ENCODE measurements at regions of chrX and their contacts with region 1.

Region 1: DNA sequence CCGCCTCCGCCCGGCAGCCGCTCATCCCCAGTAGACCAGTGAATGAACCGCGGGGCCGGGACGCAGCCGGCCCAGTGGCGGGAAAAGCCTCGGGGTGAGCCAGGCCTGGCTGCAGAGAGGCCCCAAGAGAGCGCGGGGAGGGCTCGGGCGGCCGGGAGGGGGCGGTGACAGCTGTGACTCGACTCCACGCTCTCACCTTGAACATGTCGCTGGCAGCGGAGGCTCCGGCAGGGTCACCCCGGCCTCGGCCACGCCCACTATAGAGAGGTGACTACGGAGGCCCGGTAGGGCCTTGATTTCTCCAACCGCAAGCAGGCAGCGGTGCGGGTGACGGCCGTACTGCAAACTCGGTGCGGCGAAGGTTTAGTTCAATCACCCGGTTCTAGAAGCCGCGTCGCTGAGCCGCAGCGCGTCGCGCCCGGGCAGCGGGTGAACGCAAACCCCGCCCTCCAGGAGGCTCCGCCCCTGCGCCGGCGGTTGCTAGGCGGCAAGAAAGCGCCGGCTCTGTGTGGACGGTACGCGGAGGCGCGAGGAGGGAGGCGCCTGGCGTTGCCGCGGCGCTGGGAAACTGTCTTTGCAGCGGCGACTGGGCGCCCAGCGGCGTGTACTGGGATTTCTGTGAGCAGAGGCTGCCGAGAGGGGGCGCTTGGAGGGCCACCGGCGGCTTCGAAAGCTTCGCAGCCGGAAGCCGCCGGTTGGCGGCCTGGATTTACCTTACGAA is at the starts of genes APOO and CXorf58:
- DNase-seq: peak; percentile 88 to 95
- H3K4me3 ChIP-seq: peak within 1 kb of the TSS; percentile 64 to 70
- H3K27ac ChIP-seq: peak within 1 kb of the TSS; percentile 78 to 89
- H3K4me1 ChIP-seq: peaks cover 0 to 12% (median 2%) of the 10 kb centered on the region in 4 donors
- H3K27me3 ChIP-seq: no peaks in the 10 kb centered on the region
- CTCF ChIP-seq: peak; percentile 78 to 82

Region 2: GRCh38 chrX:24024819-24025740 is 117.4 kb after region 1 on chrX:
- intact Hi-C with region 1: loop called (anchors 2 kb)
- DNase-seq: peak; percentile 78 to 92
- H3K4me3 ChIP-seq: peak overlapping the region; percentile 90 to 93
- H3K27ac ChIP-seq: peak overlapping the region; percentile 95 to 97
- H3K4me1 ChIP-seq: peaks cover 0 to 11% (median 3%) of the 10 kb centered on the region in 4 donors
- H3K27me3 ChIP-seq: no peaks in the 10 kb centered on the region
- CTCF ChIP-seq: no peak

Region 3: DNA sequence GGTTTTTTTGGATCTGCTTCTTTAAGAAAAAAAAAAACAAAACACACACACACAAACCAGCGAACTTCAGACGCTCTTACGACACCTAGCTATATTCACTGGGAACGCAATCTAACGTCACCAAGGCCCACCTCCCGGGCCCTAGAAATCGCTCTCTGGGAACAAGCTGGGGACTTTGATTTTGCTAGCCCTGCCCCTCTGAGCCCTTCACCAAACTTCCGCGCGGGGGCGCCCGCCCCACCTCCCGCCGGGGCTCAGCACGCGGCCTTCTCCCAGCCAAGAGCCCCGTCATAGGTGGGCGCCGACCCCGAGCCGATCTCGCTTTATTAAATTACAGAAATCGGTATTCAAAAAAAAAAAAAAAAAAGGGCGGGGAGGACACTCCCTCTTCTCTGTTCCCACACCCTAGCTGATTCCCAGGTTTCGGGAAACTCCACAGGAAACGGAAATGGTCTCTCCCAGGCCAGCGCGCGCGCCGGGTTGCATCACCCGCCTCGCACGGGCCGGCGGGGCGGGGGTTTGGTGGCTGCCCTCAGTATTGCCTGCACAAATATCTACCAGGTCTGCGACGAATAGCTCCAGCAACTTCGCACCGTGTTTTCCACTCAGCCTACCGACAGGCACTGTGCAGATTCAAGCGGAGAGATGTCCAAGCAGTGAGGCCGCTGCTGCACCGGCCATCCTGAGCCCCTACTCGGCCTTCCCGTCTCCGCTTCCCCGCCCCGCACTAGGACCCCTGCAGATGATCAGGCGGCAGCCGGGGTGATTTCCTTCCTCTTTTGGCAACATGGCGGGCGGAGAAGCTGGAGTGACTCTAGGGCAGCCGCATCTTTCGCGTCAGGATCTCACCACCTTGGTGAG is 146.8 kb after region 1 on chrX and contains the start of gene EIF2S3:
- intact Hi-C with region 1: loop called (anchors 10 kb)
- DNase-seq: peak; percentile 82 to 92
- H3K4me3 ChIP-seq: no peak within 1 kb of the TSS
- H3K27ac ChIP-seq: peak within 1 kb of the TSS; percentile 82 to 88
- H3K4me1 ChIP-seq: no peaks in the 10 kb centered on the region
- H3K27me3 ChIP-seq: no peaks in the 10 kb centered on the region
- CTCF ChIP-seq: peak; percentile 42 to 45

Region 4: DNA sequence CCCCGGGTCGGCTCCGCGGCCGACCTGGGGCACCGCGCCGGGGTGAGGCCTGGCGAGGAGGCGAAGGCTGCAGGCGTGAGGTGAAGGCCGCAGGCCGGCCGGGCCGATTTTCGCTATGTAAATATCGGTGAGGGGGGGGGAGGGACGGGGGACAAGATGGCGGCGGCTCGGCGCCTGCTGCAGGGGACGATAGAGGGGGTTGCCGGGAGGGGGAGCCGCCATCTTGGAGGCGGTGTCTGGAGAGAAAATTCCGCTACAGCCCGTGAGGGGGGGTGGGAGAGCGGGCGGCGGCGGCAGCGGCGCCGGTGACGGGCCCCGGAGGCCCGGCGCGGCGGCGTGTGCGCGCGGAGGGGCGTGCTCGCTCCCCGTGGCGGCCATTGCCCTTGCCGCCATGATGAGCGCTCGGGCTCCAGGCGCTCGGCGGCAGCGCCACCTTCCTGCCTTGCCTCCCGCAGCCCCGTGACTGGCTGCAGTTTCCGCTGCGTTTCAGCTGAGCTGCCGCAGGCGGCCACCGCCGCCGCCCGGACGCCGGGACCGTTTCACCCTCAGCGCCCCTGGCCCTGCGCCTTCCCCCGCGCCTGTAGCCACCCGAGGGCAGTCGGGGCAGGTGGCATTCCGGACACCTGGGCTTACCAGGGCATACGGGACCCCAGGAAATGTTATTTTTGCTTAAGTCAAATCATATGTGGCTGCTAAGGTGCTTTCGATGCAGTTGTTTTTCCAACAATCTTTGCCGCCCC is 242.6 kb after region 1 on chrX:
- intact Hi-C with region 1: loop called (anchors 10 kb)
- DNase-seq: peak; percentile 80 to 90
- H3K4me3 ChIP-seq: peak overlapping the region; percentile 66 to 72
- H3K27ac ChIP-seq: peak overlapping the region; percentile 97 to 98
- H3K4me1 ChIP-seq: peaks cover 0 to 56% (median 30%) of the 10 kb centered on the region in 4 donors
- H3K27me3 ChIP-seq: no peaks in the 10 kb centered on the region
- CTCF ChIP-seq: peak; percentile 36 to 48